Left ventricle myocardium superior (tissue), 1 donor: ENCODE measurements at regions of chr14 and their contacts with region 1.

Region 1: GRCh38 chr14:80954687-80955299 is 628 bp upstream of the TSHR start:
- DNase-seq: peak; percentile 83
- ATAC-seq: peak; percentile 97

Region 2: GRCh38 chr14:80987235-80988032 is 32.6 kb after region 1 on chr14:
- intact Hi-C with region 1: loop called (anchors 5 kb)
- DNase-seq: no peak
- ATAC-seq: peak; percentile 76

Region 3: DNA sequence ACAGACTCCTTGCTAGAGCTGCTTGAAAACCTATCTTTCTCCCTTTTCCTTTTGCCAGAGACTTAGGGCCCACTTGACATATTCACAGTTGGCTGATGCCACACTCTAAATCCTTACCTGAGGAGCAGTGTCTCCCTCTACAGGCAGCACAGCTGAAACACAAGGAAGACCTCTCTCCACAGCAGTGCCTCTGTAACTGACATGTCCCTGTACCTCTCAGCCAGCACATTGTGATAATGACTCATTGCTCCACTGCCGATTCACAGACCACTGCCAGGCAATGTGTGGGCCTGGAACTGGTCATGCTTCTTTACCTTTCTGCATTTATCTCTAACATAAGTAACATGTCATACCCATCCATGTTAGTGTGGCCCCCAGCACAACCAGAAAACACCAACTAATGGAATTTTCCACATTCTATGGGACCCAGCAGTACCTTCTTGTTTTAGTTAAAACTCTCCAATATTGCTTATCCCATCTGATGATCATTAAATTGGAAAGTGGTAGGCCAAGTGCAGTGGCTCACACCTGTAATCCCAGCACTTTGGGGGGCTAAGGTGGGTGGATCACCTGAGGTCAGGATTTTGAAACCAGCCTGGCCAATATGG is 209.5 kb after region 1 on chr14:
- intact Hi-C with region 1: loop called (anchors 10 kb)
- DNase-seq: no peak
- ATAC-seq: peak; percentile 88

Region 4: GRCh38 chr14:81550001-81550637 is 595.3 kb after region 1 on chr14:
- intact Hi-C with region 1: no loop called
- DNase-seq: no peak
- ATAC-seq: no peak